Prostate gland (tissue), 2 donors: ENCODE measurements at regions of chr5 and their contacts with region 1.

Region 1: DNA sequence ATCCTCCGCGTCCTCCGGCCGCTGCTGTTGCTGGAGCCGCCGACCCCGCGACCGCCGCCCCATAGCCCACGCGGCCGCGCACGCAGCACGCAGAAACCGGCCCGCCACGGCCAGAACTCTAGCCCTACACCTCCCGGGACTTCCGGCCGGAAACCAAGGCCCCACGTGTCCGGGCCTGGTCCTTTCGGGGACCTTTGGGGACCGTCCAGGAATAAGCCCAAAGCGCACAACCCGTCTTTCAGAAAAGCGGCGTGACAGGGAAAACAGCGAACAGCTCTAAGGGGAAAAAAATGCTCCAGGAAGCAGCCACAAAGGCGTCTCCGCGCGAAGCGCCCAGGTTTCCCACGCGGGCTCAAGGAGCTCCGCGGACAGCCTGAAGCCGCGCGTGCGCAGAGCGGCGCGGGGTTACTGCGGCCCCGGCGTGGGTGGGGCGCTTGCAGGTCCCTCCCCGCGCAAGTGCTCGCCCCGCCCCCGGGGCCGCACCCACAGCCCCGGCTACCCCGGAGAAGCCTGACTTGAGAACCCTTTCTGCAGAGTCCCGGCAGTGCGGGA is at the starts of genes NSUN2 and SRD5A1:
- DNase-seq: peak; percentile 89
- H3K4me3 ChIP-seq: peak within 1 kb of the TSS; percentile 68 to 84
- H3K27ac ChIP-seq: peak within 1 kb of the TSS; percentile 88 to 93
- H3K4me1 ChIP-seq: peaks cover 7% of the 10 kb centered on the region
- H3K27me3 ChIP-seq: no peaks in the 10 kb centered on the region
- CTCF ChIP-seq: no peak
- POLR2A ChIP-seq: no peak
- total RNA-seq, gene NSUN2: 40.8 to 54.5 TPM
- total RNA-seq, gene SRD5A1: 9.4 to 29.3 TPM

Region 2: GRCh38 chr5:6359555-6360322 is 273.3 kb before region 1 on chr5:
- intact Hi-C with region 1: no loop called
- DNase-seq: no peak
- H3K4me3 ChIP-seq: no peak overlapping the region
- H3K27ac ChIP-seq: no peak overlapping the region
- H3K4me1 ChIP-seq: no peaks in the 10 kb centered on the region
- H3K27me3 ChIP-seq: no peaks in the 10 kb centered on the region
- CTCF ChIP-seq: no peak
- POLR2A ChIP-seq: no peak

Region 3: DNA sequence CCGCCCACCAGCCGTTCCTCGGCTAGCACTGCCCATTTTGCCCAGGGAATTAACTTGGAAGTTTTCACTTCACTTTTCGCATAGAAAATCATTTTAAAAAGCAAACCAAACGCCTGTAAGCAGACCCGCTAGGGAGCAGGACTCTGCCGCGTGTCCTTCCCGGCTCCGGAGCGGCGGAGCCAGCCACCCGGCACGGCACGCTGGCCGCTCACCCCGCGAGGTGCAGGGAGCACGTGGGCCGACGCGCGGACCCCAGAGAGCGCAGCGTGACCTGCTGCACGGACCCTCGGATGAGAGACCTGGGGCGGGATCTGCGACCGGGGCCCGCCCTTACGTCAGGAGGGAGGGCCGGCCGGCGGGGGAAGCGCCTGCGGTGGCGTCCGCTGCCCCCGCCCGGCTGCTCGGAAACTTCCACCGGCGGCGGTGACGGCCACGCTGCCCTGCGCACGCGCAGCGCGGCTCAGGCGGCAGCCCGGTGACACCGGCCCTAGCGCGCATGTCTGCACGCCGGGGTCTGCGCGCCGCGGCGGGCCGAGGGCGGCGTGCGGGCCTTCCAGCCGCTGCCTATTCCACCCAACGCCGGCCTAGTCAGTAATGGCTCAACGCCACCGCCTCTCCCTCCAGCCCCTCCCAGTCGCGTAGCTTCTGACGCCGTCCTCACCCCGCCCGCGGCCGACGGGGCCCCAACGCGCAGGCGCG is 79.7 kb after region 1 on chr5:
- intact Hi-C with region 1: loop called (anchors 2 kb)
- DNase-seq: peak; percentile 96
- H3K4me3 ChIP-seq: peak overlapping the region; percentile 61 to 67
- H3K27ac ChIP-seq: peak overlapping the region; percentile 92 to 93
- H3K4me1 ChIP-seq: peaks cover 12% of the 10 kb centered on the region
- H3K27me3 ChIP-seq: no peaks in the 10 kb centered on the region
- CTCF ChIP-seq: peak in 1 of 4 experiments; percentile 40
- POLR2A ChIP-seq: peak; percentile 62

Region 4: GRCh38 chr5:7015586-7016256 is 382.7 kb after region 1 on chr5:
- intact Hi-C with region 1: no loop called
- DNase-seq: no peak
- H3K4me3 ChIP-seq: no peak overlapping the region
- H3K27ac ChIP-seq: no peak overlapping the region
- H3K4me1 ChIP-seq: no peaks in the 10 kb centered on the region
- H3K27me3 ChIP-seq: no peaks in the 10 kb centered on the region
- CTCF ChIP-seq: peak in 1 of 4 experiments; percentile 7
- POLR2A ChIP-seq: no peak